GM12878 (cell line): ENCODE measurements at regions of chr16 and their contacts with region 1.

Region 1: DNA sequence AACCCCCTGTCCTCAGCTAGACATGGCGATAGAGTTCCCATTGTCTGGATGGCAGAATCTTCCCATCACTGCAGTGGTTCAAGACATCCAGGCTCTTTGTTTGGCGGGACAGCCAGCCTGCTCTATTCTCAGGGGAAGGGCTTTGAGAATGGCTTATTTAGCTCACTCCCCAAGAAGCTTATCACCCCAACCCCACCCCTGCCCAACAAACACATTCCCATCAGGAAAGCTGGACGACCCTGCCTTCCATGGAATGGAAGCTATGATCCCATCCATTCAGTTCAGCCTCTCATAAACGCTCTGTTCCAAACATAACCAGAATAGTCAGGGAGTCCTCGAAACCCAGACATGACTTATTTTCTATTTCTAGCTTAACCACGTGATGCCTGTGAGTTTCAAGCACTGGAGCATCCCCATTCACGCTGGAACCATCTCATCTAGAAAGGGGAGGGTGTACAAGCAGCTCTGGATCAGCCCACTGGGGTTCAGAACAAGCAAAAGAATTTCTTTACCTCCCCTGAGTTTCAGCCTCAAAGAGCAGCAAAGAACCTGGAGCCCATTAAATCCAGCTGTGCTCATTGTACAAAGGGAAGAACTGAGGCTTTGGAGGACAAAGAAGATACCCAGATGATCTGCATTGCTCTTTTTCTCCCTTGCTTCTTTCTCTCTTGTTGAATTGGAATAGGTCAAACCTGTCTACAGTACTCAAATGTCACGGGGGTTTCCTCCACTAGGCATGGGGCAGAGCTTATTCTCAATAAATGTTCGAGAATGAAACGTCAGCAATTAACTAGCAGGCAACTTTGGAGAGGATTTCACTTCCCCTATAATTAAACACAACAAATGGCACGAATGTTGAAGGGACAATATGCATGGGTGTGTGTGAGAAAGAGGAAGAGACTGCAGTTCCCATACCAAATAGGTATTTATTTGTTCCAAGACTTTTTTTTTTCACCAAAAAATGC is 93.1 kb downstream of the XYLT1 start:
- DNase-seq: peak; percentile 80
- ATAC-seq: peak; percentile 90
- H3K4me3 ChIP-seq: 0 out of 2 replicates have a peak overlapping the region, but pooled peaks have one; percentile 43
- H3K27ac ChIP-seq: peak overlapping the region; percentile 72
- H3K4me1 ChIP-seq: peaks cover 35% of the 10 kb centered on the region
- H3K27me3 ChIP-seq: no peaks in the 10 kb centered on the region
- CTCF ChIP-seq: no peak
- EP300 ChIP-seq: peak; percentile 84 to 91; a peak in 2 of 4 replicates
- POLR2A ChIP-seq: no peak
- RAD21 ChIP-seq: peak; percentile 21; the same call in 1 of the 2 replicates

Region 2: GRCh38 chr16:17211797-17212196 is 165.8 kb before region 1 on chr16:
- CTCF ChIA-PET with region 1: no interaction called
- POLR2A ChIA-PET with region 1: no interaction called
- RAD21 ChIA-PET with region 1: no interaction called
- SMC1A ChIA-PET with region 1: no interaction called
- in situ Hi-C with region 1: no loop called
- intact Hi-C with region 1: no loop called
- DNase-seq: no peak
- ATAC-seq: peak; percentile 88
- H3K4me3 ChIP-seq: no peak overlapping the region
- H3K27ac ChIP-seq: no peak overlapping the region
- H3K4me1 ChIP-seq: no peaks in the 10 kb centered on the region
- H3K27me3 ChIP-seq: no peaks in the 10 kb centered on the region
- CTCF ChIP-seq: peak; percentile 57 to 62 (median 62); a peak in 5 of 6 replicates
- EP300 ChIP-seq: no peak
- POLR2A ChIP-seq: no peak
- RAD21 ChIP-seq: peak; percentile 61

Region 3: GRCh38 chr16:17313085-17313611 is 64.5 kb before region 1 on chr16:
- CTCF ChIA-PET with region 1: interaction called, 4 read pairs
- POLR2A ChIA-PET with region 1: no interaction called
- RAD21 ChIA-PET with region 1: interaction called, 13 read pairs
- SMC1A ChIA-PET with region 1: interaction called, 3 read pairs
- in situ Hi-C with region 1: no loop called
- intact Hi-C with region 1: no loop called
- DNase-seq: no peak
- ATAC-seq: peak; percentile 18; the same call in 2 of the 3 replicates
- H3K4me3 ChIP-seq: no peak overlapping the region
- H3K27ac ChIP-seq: no peak overlapping the region
- H3K4me1 ChIP-seq: peaks cover 10% of the 10 kb centered on the region
- H3K27me3 ChIP-seq: no peaks in the 10 kb centered on the region
- CTCF ChIP-seq: no peak
- EP300 ChIP-seq: no peak
- POLR2A ChIP-seq: no peak
- RAD21 ChIP-seq: no peak

Region 4: GRCh38 chr16:17399948-17400347 is 22.3 kb after region 1 on chr16:
- CTCF ChIA-PET with region 1: interaction called, 3 read pairs
- POLR2A ChIA-PET with region 1: interaction called, 8 read pairs
- RAD21 ChIA-PET with region 1: interaction called, 5 read pairs
- SMC1A ChIA-PET with region 1: interaction called, 16 read pairs
- in situ Hi-C with region 1: no loop called
- intact Hi-C with region 1: no loop called
- DNase-seq: no peak
- ATAC-seq: no peak
- H3K4me3 ChIP-seq: no peak overlapping the region
- H3K27ac ChIP-seq: no peak overlapping the region
- H3K4me1 ChIP-seq: peaks cover 4% of the 10 kb centered on the region
- H3K27me3 ChIP-seq: no peaks in the 10 kb centered on the region
- CTCF ChIP-seq: no peak
- EP300 ChIP-seq: no peak
- POLR2A ChIP-seq: no peak
- RAD21 ChIP-seq: no peak

Region 5: DNA sequence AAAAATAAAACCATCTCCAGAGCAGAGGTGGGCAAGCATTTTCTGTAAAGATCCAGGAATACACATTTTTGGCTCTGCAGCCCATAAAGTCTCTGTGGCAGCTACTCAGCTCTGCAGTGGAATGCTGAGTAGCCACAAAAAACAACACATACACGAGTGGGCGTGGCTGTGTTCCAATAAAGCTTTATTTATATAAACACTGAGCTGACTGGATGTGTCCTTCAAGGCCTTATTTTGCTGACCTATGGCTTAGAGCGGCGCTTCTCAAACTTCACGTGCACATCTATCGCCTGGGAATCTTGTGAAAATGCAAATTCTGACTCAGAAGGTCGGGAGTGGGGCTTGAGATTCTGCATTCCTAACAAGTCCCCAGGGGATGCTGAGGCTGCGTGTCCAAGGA is 53.4 kb after region 1 on chr16:
- CTCF ChIA-PET with region 1: no interaction called
- POLR2A ChIA-PET with region 1: no interaction called
- RAD21 ChIA-PET with region 1: no interaction called
- SMC1A ChIA-PET with region 1: no interaction called
- in situ Hi-C with region 1: no loop called
- intact Hi-C with region 1: no loop called
- DNase-seq: no peak
- ATAC-seq: no peak
- H3K4me3 ChIP-seq: no peak overlapping the region
- H3K27ac ChIP-seq: no peak overlapping the region
- H3K4me1 ChIP-seq: no peaks in the 10 kb centered on the region
- H3K27me3 ChIP-seq: no peaks in the 10 kb centered on the region
- CTCF ChIP-seq: no peak
- EP300 ChIP-seq: no peak
- POLR2A ChIP-seq: no peak
- RAD21 ChIP-seq: no peak

Region 6: DNA sequence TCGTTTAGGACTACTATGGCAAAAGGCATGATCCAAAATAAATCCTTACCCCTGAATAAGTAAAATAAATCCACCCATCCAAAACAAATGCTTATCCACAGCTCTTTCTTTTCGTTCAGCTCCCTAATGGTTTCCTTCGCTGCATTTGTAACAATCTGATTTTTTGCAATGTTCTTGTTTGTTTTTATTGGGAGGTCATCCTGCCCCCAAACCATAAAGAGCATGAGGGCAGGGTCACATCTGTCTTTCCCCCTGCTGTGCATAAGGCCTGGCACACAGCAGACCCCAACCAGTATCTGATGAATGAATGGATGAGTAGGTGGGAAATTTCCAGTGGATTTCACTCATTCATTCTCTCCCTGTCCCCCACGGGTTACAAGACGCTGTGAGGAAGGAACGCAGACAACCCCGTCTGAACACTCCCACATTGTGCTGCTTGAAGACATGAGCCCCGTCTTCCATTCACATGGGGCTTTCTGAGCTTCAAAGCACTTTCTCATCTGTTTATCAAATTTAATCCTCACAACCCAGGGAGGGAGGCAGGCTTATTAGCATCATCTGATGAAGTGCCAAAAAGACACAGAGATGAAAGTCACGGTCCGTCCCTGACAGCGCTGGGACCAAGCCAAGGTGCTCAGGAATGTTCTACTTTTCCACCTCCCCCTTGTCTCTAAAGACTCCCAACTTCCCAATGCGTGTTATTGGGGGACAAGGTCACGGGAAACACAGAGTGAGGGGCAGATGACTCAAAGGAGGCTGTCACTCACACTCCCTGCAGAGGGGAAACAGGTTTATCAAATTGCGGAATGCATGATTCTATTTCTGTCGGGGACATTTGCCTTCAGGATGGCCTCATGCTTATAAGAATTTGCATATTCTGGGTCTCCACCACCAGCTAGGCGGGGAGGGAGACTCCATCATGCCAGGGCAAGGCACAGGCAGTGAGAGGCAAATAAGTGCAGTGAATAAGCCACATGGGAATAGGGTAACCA is 82.2 kb after region 1 on chr16:
- CTCF ChIA-PET with region 1: interaction called, 4 read pairs
- POLR2A ChIA-PET with region 1: no interaction called
- RAD21 ChIA-PET with region 1: interaction called, 14 read pairs
- SMC1A ChIA-PET with region 1: interaction called, 15 read pairs
- in situ Hi-C with region 1: no loop called
- intact Hi-C with region 1: no loop called
- DNase-seq: no peak
- ATAC-seq: peak; percentile 72
- H3K4me3 ChIP-seq: no peak overlapping the region; the same call in 1 of the 2 replicates
- H3K27ac ChIP-seq: no peak overlapping the region
- H3K4me1 ChIP-seq: peaks cover 40% of the 10 kb centered on the region
- H3K27me3 ChIP-seq: no peaks in the 10 kb centered on the region
- CTCF ChIP-seq: no peak
- EP300 ChIP-seq: no peak
- POLR2A ChIP-seq: no peak
- RAD21 ChIP-seq: no peak